T-cell (primary cell): ENCODE measurements at regions of chr1 and their contacts with region 1.

Region 1: DNA sequence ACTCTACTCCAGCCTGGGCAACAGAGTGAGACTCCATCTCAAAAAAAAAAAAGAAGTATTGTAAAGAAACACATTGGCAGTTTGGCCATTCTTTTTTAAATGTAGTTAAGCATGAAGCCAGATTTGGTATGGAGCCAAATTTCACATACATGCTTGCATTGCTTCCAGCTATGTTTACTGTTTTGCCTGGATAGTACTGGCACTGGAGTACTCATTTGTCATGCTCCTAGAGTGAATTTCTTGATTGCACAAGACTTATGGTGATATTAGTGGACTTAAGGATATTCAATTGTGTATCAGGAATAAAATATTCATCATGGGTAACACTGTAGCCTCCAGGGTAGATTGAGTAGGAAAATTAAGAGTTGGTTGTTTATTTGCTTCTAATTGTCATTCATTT is 24.5 kb upstream of the SLC9A1 start:
- DNase-seq: no peak
- ATAC-seq: no peak
- H3K4me3 ChIP-seq: no peak overlapping the region
- H3K4me3 Mint-ChIP-seq: no peak overlapping the region
- H3K27ac ChIP-seq: no peak overlapping the region
- H3K27ac Mint-ChIP-seq: no peak overlapping the region
- H3K4me1 ChIP-seq: no peaks in the 10 kb centered on the region
- H3K4me1 Mint-ChIP-seq: no peaks in the 10 kb centered on the region
- H3K27me3 ChIP-seq: no peaks in the 10 kb centered on the region
- H3K27me3 Mint-ChIP-seq: no peaks in the 10 kb centered on the region

Region 2: DNA sequence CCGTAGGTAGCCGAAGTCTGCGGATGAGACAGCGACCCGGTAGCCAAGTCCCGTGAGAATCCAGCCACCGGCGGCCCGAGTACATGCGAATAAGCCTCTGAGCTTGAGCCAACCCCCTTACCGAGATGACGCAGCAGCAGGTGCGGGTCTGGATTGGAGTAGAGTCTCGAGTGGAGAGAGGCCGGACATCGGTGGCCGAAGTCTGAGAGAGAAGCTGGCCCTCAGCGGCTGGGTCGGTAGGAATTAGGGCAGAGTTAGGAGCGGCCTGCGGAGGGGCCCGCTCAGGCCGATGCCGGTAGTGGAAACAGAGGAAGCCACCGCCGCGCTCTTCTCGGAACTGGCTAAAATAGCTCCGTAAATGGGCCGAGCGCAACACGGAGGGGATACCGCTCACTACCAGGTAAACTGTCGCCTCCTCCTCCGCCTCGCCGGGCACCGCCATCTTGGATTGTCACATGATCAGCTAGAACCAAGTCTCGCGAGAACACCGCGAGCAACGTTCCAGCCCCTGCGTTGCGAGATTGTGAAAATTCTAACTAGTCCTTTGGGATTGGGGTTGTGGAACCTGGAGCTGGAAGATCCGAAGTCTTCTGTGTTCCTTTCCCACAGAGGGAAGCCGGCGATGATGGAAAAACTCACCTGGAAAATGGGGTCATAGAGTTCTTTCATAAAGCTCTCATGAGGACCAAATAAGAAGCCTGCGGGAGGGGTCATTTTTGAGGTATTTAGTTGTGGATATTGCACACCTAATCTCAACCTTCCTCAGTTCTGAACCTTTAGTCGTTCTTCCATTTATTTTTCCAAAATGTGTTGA is 279.2 kb before region 1 on chr1 and contains the start of gene GPATCH3:
- CTCF ChIA-PET with region 1: interaction called in 1 of 2 experiments, 11 read pairs
- POLR2A ChIA-PET with region 1: no interaction called
- DNase-seq: peak; percentile 71 to 94 (median 83)
- ATAC-seq: peak; percentile 92 to 96 (median 94)
- H3K4me3 ChIP-seq: peak within 1 kb of the TSS; percentile 70 to 92
- H3K4me3 Mint-ChIP-seq: peak within 1 kb of the TSS; percentile 95 to 97 (median 97)
- H3K27ac ChIP-seq: peak within 1 kb of the TSS; percentile 78
- H3K27ac Mint-ChIP-seq: peak within 1 kb of the TSS; percentile 99
- H3K4me1 ChIP-seq: peaks cover 15 to 21% of the 10 kb centered on the region in 2 experiments
- H3K4me1 Mint-ChIP-seq: peaks cover 27 to 41% (median 31%) of the 10 kb centered on the region in 3 donors
- H3K27me3 ChIP-seq: no peaks in the 10 kb centered on the region
- H3K27me3 Mint-ChIP-seq: no peaks in the 10 kb centered on the region
- total RNA-seq, gene GPATCH3: 23.6 to 28.6 (median 27.6) TPM

Region 3: GRCh38 chr1:27201295-27201694 is 21.9 kb after region 1 on chr1:
- CTCF ChIA-PET with region 1: no interaction called
- POLR2A ChIA-PET with region 1: no interaction called
- DNase-seq: no peak
- ATAC-seq: no peak
- H3K4me3 ChIP-seq: no peak overlapping the region
- H3K4me3 Mint-ChIP-seq: no peak overlapping the region
- H3K27ac ChIP-seq: no peak overlapping the region
- H3K27ac Mint-ChIP-seq: no peak overlapping the region
- H3K4me1 ChIP-seq: peaks cover 0 to 4% of the 10 kb centered on the region in 2 experiments
- H3K4me1 Mint-ChIP-seq: peaks cover 6 to 8% (median 6%) of the 10 kb centered on the region in 3 donors
- H3K27me3 ChIP-seq: peaks cover 0 to 5% of the 10 kb centered on the region in 2 experiments
- H3K27me3 Mint-ChIP-seq: no peaks in the 10 kb centered on the region

Region 4: GRCh38 chr1:27296773-27297291 is 117.5 kb after region 1 on chr1:
- CTCF ChIA-PET with region 1: no interaction called
- POLR2A ChIA-PET with region 1: no interaction called
- DNase-seq: peak in 34 of 35 experiments; percentile 20 to 76 (median 58)
- ATAC-seq: peak; percentile 56 to 68 (median 59)
- H3K4me3 ChIP-seq: no peak overlapping the region
- H3K4me3 Mint-ChIP-seq: no peak overlapping the region
- H3K27ac ChIP-seq: no peak overlapping the region
- H3K27ac Mint-ChIP-seq: no peak overlapping the region
- H3K4me1 ChIP-seq: peaks cover 0 to 8% of the 10 kb centered on the region in 2 experiments
- H3K4me1 Mint-ChIP-seq: peaks cover 0 to 5% (median 2%) of the 10 kb centered on the region in 3 donors
- H3K27me3 ChIP-seq: no peaks in the 10 kb centered on the region
- H3K27me3 Mint-ChIP-seq: no peaks in the 10 kb centered on the region

Region 5: DNA sequence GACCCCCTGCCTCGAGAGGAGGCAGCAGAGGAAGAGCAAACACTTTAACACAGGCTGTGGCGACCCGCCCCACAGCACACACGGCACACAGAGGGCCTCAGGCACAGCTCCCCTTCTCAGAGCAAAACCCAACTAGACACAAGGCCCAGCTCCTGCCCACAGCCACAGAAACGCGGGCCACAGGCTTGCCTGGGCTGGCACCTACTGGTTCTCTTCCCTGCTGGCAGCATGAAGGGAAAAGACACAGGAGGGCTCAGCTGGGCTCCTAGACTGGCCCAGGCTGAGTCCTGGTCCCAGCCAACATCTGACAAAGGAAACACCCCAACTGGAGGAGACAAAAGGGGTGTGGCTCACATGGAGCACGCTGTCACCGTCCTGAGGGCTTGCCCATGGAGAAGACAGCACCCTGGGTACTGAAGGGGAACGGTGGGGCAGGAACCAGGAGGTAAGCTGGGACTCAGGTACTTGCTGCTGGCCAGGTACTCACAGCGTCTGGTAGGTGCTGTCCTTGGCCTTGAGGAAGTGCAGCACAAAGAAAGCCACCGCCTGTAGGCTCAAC is 200.3 kb after region 1 on chr1:
- CTCF ChIA-PET with region 1: no interaction called
- POLR2A ChIA-PET with region 1: interaction called in 1 of 2 experiments, 13 read pairs
- DNase-seq: no peak
- ATAC-seq: no peak
- H3K4me3 ChIP-seq: no peak overlapping the region
- H3K4me3 Mint-ChIP-seq: no peak overlapping the region
- H3K27ac ChIP-seq: no peak overlapping the region
- H3K27ac Mint-ChIP-seq: no peak overlapping the region
- H3K4me1 ChIP-seq: peaks cover 0 to 2% of the 10 kb centered on the region in 2 experiments
- H3K4me1 Mint-ChIP-seq: peaks cover 0 to 7% (median 0%) of the 10 kb centered on the region in 3 donors
- H3K27me3 ChIP-seq: peaks cover 0 to 16% of the 10 kb centered on the region in 2 experiments
- H3K27me3 Mint-ChIP-seq: peaks cover 0 to 3% of the 10 kb centered on the region in 2 donors